ENCODE measurements at regions of chr18 and their contacts with region 1.

Region 1: GRCh38 chr18:42114310-42114943 is 159.4 kb downstream of the PIK3C3 start:
- DNase-seq: peak; percentile 80
- H3K4me3 Mint-ChIP-seq: no peak overlapping the region
- H3K27ac Mint-ChIP-seq: no peak overlapping the region
- H3K4me1 Mint-ChIP-seq: peaks cover 8% of the 10 kb centered on the region
- H3K27me3 Mint-ChIP-seq: no peaks in the 10 kb centered on the region
- CTCF ChIP-seq: peak; percentile 82

Region 2: GRCh38 chr18:42100911-42101310 is 13.5 kb before region 1 on chr18:
- CTCF ChIA-PET with region 1: interaction called, 28 read pairs
- POLR2A ChIA-PET with region 1: no interaction called
- intact Hi-C with region 1: no loop called
- DNase-seq: no peak
- H3K4me3 Mint-ChIP-seq: no peak overlapping the region
- H3K27ac Mint-ChIP-seq: no peak overlapping the region
- H3K4me1 Mint-ChIP-seq: no peaks in the 10 kb centered on the region
- H3K27me3 Mint-ChIP-seq: no peaks in the 10 kb centered on the region
- CTCF ChIP-seq: no peak

Region 3: GRCh38 chr18:42242758-42243157 is 128.3 kb after region 1 on chr18:
- CTCF ChIA-PET with region 1: interaction called, 10 read pairs
- POLR2A ChIA-PET with region 1: no interaction called
- intact Hi-C with region 1: no loop called
- DNase-seq: no peak
- H3K4me3 Mint-ChIP-seq: no peak overlapping the region
- H3K27ac Mint-ChIP-seq: no peak overlapping the region
- H3K4me1 Mint-ChIP-seq: no peaks in the 10 kb centered on the region
- H3K27me3 Mint-ChIP-seq: no peaks in the 10 kb centered on the region
- CTCF ChIP-seq: no peak

Region 4: GRCh38 chr18:42586601-42587000 is 472.2 kb after region 1 on chr18:
- CTCF ChIA-PET with region 1: no interaction called
- POLR2A ChIA-PET with region 1: no interaction called
- intact Hi-C with region 1: loop called (anchors 10 kb)
- DNase-seq: no peak
- H3K4me3 Mint-ChIP-seq: no peak overlapping the region
- H3K27ac Mint-ChIP-seq: no peak overlapping the region
- H3K4me1 Mint-ChIP-seq: no peaks in the 10 kb centered on the region
- H3K27me3 Mint-ChIP-seq: peaks cover 39% of the 10 kb centered on the region
- CTCF ChIP-seq: no peak

Region 5: GRCh38 chr18:43396266-43396665 is 1281.8 kb after region 1 on chr18:
- CTCF ChIA-PET with region 1: interaction called, 7 read pairs
- POLR2A ChIA-PET with region 1: no interaction called
- intact Hi-C with region 1: loop called (anchors 1 kb)
- DNase-seq: peak; percentile 33
- H3K4me3 Mint-ChIP-seq: no peak overlapping the region
- H3K27ac Mint-ChIP-seq: no peak overlapping the region
- H3K4me1 Mint-ChIP-seq: peaks cover 10% of the 10 kb centered on the region
- H3K27me3 Mint-ChIP-seq: peaks cover 20% of the 10 kb centered on the region
- CTCF ChIP-seq: peak; percentile 49